T-cell (primary cell): ENCODE measurements at regions of chr11 and their contacts with region 1.

Region 1: GRCh38 chr11:5564259-5565019 is 16.1 kb upstream of the OR52H1 start:
- DNase-seq: no peak
- ATAC-seq: no peak
- H3K4me3 ChIP-seq: no peak overlapping the region
- H3K4me3 Mint-ChIP-seq: no peak overlapping the region
- H3K27ac ChIP-seq: no peak overlapping the region
- H3K27ac Mint-ChIP-seq: no peak overlapping the region
- H3K4me1 ChIP-seq: no peaks in the 10 kb centered on the region
- H3K4me1 Mint-ChIP-seq: peaks cover 4 to 7% (median 6%) of the 10 kb centered on the region in 3 donors
- H3K27me3 ChIP-seq: no peaks in the 10 kb centered on the region
- H3K27me3 Mint-ChIP-seq: peaks cover 6 to 11% of the 10 kb centered on the region in 2 donors

Region 2: DNA sequence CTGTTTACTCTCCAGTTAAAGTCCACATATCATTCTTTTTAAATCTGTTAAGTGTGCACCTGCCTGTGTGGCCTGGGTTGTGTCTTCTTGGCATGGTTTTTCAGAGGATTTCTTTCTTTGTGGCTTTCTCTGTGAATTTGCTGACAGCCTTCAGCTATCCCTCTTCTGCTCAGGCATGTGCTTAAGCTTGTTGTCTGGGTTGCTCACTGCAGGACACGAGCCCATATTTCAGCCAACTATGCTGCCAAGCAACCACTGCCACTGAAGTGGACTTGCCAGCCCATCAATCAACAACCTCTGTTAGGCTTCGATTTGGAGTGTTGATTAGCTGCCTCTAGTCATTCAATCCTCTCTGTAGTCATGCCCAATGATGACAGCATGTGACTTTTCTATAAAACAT is 96.9 kb before region 1 on chr11:
- CTCF ChIA-PET with region 1: no interaction called
- POLR2A ChIA-PET with region 1: interaction called in 1 of 2 experiments, 13 read pairs
- DNase-seq: no peak
- ATAC-seq: no peak
- H3K4me3 ChIP-seq: no peak overlapping the region
- H3K4me3 Mint-ChIP-seq: no peak overlapping the region
- H3K27ac ChIP-seq: no peak overlapping the region
- H3K27ac Mint-ChIP-seq: no peak overlapping the region
- H3K4me1 ChIP-seq: no peaks in the 10 kb centered on the region
- H3K4me1 Mint-ChIP-seq: no peaks in the 10 kb centered on the region
- H3K27me3 ChIP-seq: no peaks in the 10 kb centered on the region
- H3K27me3 Mint-ChIP-seq: peaks cover 5 to 22% of the 10 kb centered on the region in 2 donors

Region 3: GRCh38 chr11:5547982-5548381 is 16.5 kb before region 1 on chr11:
- CTCF ChIA-PET with region 1: no interaction called
- POLR2A ChIA-PET with region 1: no interaction called
- DNase-seq: no peak
- ATAC-seq: no peak
- H3K4me3 ChIP-seq: no peak overlapping the region
- H3K4me3 Mint-ChIP-seq: no peak overlapping the region
- H3K27ac ChIP-seq: no peak overlapping the region
- H3K27ac Mint-ChIP-seq: no peak overlapping the region
- H3K4me1 ChIP-seq: no peaks in the 10 kb centered on the region
- H3K4me1 Mint-ChIP-seq: no peaks in the 10 kb centered on the region
- H3K27me3 ChIP-seq: no peaks in the 10 kb centered on the region
- H3K27me3 Mint-ChIP-seq: peaks cover 3 to 8% of the 10 kb centered on the region in 2 donors